ENCODE measurements at regions of chr10 and their contacts with region 1.

Region 1: DNA sequence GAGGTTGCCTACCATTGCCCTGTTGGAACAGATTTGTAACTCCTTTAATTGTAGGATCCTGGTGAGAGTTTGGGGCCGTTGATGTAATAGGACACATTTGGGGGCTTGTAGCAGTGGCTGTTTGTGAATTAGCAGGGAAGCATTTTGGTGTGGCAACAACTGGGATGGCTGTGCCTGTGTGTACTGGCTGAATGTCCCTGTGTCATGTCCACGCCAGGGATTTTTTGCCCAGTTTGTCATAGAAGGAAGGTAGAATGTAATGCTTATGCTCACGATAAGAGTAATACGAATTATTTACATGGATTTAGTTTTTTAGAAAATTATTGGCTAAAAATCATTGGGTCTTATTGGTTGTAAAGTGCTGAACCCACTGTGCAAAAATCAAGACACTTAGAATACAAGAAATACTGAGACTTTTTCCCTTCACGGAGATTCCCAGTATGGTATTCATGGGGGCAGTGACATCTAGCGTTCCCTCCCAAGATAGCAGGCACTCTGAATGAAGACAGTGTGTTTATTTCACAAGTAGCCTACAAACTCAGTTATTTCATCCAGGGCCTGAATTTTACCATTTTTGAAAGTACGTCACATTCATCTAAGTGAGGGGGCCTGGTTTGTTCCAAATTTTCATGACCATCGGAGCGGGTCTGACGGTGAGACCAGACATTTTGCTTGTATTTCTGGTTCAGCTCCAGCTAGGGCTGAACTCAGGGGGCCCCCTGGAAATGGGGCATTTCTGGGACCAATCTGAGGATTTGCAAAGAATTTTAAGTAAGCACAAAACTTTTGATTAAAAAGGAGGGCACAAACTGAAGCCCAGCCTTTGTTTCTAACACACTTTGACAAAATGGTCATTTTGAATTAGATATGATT is 74.7 kb downstream of the CACNB2 start:
- DNase-seq: peak in 1 of 2 donors; percentile 72
- H3K4me3 ChIP-seq: no peak overlapping the region
- H3K27ac ChIP-seq: no peak overlapping the region
- H3K4me1 ChIP-seq: no peaks in the 10 kb centered on the region
- H3K27me3 ChIP-seq: no peaks in the 10 kb centered on the region
- CTCF ChIP-seq: peak; percentile 52 to 84 (median 81)

Region 2: GRCh38 chr10:18104223-18104872 is 110.6 kb before region 1 on chr10:
- intact Hi-C with region 1: loop called (anchors 5 kb)
- DNase-seq: peak in 1 of 2 donors; percentile 70
- H3K4me3 ChIP-seq: peak overlapping the region in 1 of 2 donors; percentile 53
- H3K27ac ChIP-seq: no peak overlapping the region
- H3K4me1 ChIP-seq: no peaks in the 10 kb centered on the region
- H3K27me3 ChIP-seq: no peaks in the 10 kb centered on the region
- CTCF ChIP-seq: peak; percentile 39 to 72 (median 52)

Measured in ascending aorta (tissue), 2 donors.